HEK293 (cell line): ENCODE measurements at regions of chr6 and their contacts with region 1.

Region 1: GRCh38 chr6:150417899-150418826 is 49.4 kb downstream of the IYD start:
- H3K4me3 ChIP-seq: no peak overlapping the region; the same call in 1 of the 2 replicates
- H3K27ac ChIP-seq: peak overlapping the region; percentile 78
- H3K4me1 ChIP-seq: peaks cover 8% of the 10 kb centered on the region; the same call in 1 of the 2 replicates
- CTCF ChIP-seq: peak; percentile 83

Region 2: DNA sequence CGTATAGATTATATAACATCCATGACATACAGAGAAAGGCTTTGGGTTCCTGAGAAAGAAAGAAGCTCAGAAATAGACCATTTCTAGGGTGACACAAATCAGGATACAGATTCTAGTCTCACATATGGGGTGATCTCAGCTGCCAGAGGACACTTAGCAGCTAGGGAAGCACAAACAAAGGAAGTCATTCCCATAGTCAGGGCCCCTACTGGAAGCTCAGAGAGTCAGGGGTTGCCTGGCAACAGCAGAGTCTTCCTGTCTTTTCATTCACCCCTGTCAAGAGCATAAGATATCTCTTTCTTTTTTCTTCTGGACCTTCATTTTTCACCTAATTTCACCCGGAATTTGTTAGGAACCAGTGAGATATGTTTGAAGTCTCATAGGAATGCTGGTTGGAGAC is 131.3 kb before region 1 on chr6:
- CTCF ChIA-PET with region 1: no interaction called
- POLR2A ChIA-PET with region 1: no interaction called
- H3K4me3 ChIP-seq: no peak overlapping the region
- H3K27ac ChIP-seq: no peak overlapping the region
- H3K4me1 ChIP-seq: no peaks in the 10 kb centered on the region
- CTCF ChIP-seq: no peak

Region 3: DNA sequence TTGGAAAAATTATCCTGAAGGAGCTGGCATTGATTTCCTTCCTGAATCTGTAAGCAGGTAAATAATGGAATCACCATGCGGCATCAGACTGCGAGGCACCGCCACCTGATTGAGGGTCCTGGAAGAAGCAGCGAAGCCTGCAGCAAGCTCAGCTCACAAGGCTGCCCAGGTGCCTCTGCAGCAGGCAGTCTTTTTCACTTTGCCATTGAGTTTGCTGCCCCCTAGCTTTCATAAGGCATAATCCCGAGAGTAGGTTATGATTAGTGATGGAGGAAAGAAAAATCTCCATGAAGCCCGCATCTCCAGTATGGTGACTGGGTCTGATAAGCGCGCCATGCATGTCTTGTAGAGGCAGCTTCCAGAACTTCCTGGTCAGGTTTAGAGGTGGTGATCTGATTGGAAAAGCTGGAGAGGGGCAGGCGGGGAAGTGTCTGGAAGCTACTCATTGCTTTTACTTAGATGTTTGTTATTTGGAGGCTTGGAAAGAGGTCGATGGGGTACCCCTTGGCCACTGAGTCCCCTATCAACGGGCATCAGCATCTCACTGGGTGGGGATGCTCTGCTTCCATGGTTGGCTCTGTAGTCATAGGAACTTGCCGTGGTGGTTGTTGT is 22.7 kb before region 1 on chr6:
- CTCF ChIA-PET with region 1: interaction called, 20 read pairs
- POLR2A ChIA-PET with region 1: no interaction called
- H3K4me3 ChIP-seq: no peak overlapping the region
- H3K27ac ChIP-seq: no peak overlapping the region
- H3K4me1 ChIP-seq: no peaks in the 10 kb centered on the region
- CTCF ChIP-seq: peak; percentile 47; the same call in 1 of the 2 replicates

Region 4: DNA sequence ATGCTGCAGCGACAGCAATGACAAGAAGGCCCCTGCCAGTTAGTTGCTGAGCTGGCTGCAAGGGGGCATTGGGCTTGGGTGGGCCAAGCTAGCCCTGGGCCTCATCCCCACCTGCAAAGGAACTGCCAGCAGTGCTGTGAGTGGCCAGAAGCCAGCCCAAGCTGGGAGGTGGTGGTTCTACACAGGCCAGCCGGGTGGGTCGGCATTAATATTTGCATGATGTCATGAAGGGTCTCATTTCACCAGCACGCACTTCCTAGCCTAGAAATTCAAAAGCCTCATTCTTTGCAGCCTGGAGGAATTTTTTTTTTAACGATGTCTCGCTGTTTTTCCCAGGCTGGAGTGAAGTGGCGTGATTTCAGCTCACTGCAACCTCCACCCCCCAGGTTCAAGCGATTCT is 12.7 kb after region 1 on chr6:
- CTCF ChIA-PET with region 1: interaction called, 41 read pairs
- POLR2A ChIA-PET with region 1: no interaction called
- H3K4me3 ChIP-seq: no peak overlapping the region
- H3K27ac ChIP-seq: no peak overlapping the region
- H3K4me1 ChIP-seq: no peaks in the 10 kb centered on the region; the same call in 1 of the 2 replicates
- CTCF ChIP-seq: no peak

Region 5: GRCh38 chr6:150579611-150580010 is 161.4 kb after region 1 on chr6:
- CTCF ChIA-PET with region 1: interaction called, 11 read pairs
- POLR2A ChIA-PET with region 1: no interaction called
- H3K4me3 ChIP-seq: no peak overlapping the region
- H3K27ac ChIP-seq: no peak overlapping the region
- H3K4me1 ChIP-seq: peaks cover 7% of the 10 kb centered on the region
- CTCF ChIP-seq: no peak

Region 6: GRCh38 chr6:150600301-150601017 is 182.3 kb after region 1 on chr6:
- CTCF ChIA-PET with region 1: interaction called, 38 read pairs
- POLR2A ChIA-PET with region 1: interaction called, 18 read pairs
- H3K4me3 ChIP-seq: peak overlapping the region; percentile 72
- H3K27ac ChIP-seq: peak overlapping the region; percentile 90
- H3K4me1 ChIP-seq: peaks cover 7% of the 10 kb centered on the region
- CTCF ChIP-seq: peak; percentile 65

Region 7: DNA sequence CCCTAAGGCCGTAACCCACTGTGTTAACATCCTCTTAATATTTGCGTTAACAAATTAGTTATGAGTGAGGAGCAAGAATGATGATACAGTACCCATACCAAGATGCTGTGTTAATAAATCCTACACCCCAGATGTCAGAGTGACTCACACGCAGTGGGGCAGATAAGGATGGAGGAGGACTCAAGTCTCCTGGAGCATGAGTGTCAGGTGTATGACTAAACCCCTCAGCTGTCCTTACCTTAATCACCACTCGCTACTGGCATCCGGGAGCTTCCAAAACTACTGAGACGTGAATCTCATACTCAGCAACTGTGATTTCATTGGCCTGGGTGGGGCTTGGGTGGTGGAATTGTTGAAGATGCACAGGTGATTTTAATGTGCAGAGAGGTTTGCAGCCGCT is 316.1 kb after region 1 on chr6:
- CTCF ChIA-PET with region 1: interaction called, 14 read pairs
- POLR2A ChIA-PET with region 1: no interaction called
- H3K4me3 ChIP-seq: no peak overlapping the region
- H3K27ac ChIP-seq: no peak overlapping the region
- H3K4me1 ChIP-seq: peaks cover 4% of the 10 kb centered on the region
- CTCF ChIP-seq: no peak

Region 8: DNA sequence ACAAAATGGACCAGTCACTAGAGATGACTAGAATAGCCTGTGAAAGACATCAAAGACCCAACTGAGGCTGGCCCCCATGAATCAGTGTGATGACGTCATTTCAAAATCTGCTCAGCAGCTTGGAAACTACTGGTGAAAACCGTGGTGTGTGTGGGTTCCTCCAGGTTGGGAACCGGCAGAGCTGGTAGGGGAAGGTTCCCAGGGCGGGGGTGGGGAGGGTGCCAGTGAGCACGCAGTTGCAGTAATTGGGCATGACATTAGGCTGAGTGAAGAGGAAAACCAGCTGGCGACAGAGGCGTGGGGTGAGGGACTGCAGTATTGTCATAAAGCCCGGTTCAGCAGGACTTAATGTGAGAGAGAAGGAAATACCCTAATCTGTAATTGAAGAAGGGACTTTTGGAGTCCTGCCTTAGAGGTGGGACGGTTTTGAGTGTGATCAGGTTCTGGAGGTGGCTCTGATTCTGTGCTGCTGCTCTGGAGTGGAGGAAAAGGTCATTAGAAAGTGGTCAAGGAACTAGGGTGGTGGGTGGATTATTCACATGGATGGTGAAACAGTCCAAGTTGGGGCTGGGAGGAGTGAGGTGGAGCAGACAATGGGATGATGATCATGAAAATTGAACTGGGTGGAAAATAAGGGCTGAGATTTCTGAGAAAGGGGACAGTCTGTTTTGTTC is 395.3 kb after region 1 on chr6:
- CTCF ChIA-PET with region 1: interaction called, 168 read pairs
- POLR2A ChIA-PET with region 1: interaction called, 3 read pairs
- H3K4me3 ChIP-seq: no peak overlapping the region
- H3K27ac ChIP-seq: no peak overlapping the region; the same call in 1 of the 2 replicates
- H3K4me1 ChIP-seq: peaks cover 11% of the 10 kb centered on the region; the same call in 1 of the 2 replicates
- CTCF ChIP-seq: no peak